OCI-LY7 (cell line): ENCODE measurements at regions of chr9 and their contacts with region 1.

Region 1: GRCh38 chr9:24459953-24460352 is 85.7 kb downstream of the IZUMO3 start:
- DNase-seq: no peak
- H3K4me3 ChIP-seq: no peak overlapping the region
- H3K27ac ChIP-seq: no peak overlapping the region
- H3K4me1 ChIP-seq: no peaks in the 10 kb centered on the region
- CTCF ChIP-seq: no peak

Region 2: GRCh38 chr9:23926378-23926777 is 533.6 kb before region 1 on chr9:
- CTCF ChIA-PET with region 1: no interaction called
- POLR2A ChIA-PET with region 1: no interaction called
- intact Hi-C with region 1: no loop called
- DNase-seq: no peak
- H3K4me3 ChIP-seq: no peak overlapping the region
- H3K27ac ChIP-seq: no peak overlapping the region
- H3K4me1 ChIP-seq: no peaks in the 10 kb centered on the region
- CTCF ChIP-seq: no peak

Region 3: GRCh38 chr9:24413651-24414050 is 46.3 kb before region 1 on chr9:
- CTCF ChIA-PET with region 1: no interaction called
- POLR2A ChIA-PET with region 1: no interaction called
- intact Hi-C with region 1: loop called (anchors 1 kb)
- DNase-seq: no peak
- H3K4me3 ChIP-seq: no peak overlapping the region
- H3K27ac ChIP-seq: no peak overlapping the region
- H3K4me1 ChIP-seq: no peaks in the 10 kb centered on the region
- CTCF ChIP-seq: no peak

Region 4: DNA sequence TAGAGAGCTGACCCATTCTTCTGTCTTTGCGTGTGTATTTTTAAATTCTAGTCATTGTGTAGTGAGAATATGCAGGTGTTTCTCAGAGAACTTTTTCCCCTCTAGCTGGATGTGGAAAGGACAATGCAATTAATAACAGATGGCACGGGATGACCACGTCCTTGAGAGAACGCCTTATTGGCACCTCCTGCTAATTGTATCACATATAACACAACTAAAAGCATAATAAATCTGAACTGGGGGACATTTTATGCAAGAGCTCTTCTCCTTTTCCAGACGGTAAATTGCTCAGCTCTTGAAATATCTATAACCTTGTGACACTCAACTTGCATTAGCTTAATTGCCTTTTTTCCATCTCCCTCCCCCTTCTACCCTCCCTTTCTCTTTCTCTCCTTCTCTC is 148.6 kb after region 1 on chr9:
- CTCF ChIA-PET with region 1: no interaction called
- POLR2A ChIA-PET with region 1: no interaction called
- intact Hi-C with region 1: no loop called
- DNase-seq: no peak
- H3K4me3 ChIP-seq: no peak overlapping the region
- H3K27ac ChIP-seq: no peak overlapping the region
- H3K4me1 ChIP-seq: no peaks in the 10 kb centered on the region
- CTCF ChIP-seq: no peak